ENCODE measurements at regions of chr19 and their contacts with region 1.

Region 1: DNA sequence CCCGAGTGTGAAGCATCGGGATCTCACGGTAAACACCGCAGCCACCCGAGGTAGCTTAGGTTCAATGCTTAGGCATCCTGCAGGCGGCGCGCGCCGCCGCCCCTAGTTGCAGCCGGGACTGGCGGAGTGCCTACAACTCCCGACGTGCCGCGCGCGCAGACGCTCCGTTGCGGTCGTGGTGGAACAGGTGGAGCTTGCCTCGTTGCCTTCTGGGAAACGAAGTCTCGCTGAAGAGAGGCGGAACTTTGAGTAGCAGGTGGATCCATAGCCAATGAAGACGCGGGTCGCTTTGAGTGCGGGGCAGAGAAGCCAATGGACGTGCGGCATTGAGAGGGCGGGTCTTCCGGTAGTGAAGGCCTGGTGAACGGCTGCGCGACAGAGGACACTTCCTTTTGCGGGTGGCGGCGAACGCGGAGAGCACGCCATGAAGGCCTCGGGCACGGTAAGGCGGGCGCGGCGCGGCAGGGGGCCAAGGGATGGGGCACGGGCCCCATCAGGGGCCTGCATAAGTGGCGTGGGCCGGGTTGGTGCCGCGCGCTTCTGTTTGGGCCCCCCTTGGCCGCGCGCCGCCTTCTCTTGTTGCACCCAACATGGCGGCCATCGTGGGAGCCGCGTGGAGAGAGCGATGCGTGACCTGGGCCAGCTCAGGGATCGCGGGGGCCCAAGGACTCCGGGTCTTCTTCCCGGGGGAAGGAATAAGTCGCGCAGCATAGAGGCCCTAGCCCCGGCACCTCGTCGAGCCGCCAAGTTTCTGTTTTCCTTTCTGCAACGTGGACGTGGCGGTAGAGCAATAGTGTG is at the start of gene RPL18A:
- DNase-seq: peak; percentile 99
- H3K4me3 Mint-ChIP-seq: peak within 1 kb of the TSS; percentile 99
- H3K27ac Mint-ChIP-seq: peak within 1 kb of the TSS; percentile 99
- H3K4me1 Mint-ChIP-seq: peaks cover 20% of the 10 kb centered on the region
- H3K27me3 Mint-ChIP-seq: no peaks in the 10 kb centered on the region
- total RNA-seq, gene RPL18A: 2,784 and 2,842 TPM in 2 replicates

Region 2: GRCh38 chr19:17747205-17748098 is 112.3 kb before region 1 on chr19:
- intact Hi-C with region 1: loop called (anchors 5 kb)
- DNase-seq: peak; percentile 93
- H3K4me3 Mint-ChIP-seq: peak overlapping the region; percentile 88
- H3K27ac Mint-ChIP-seq: peak overlapping the region; percentile 82
- H3K4me1 Mint-ChIP-seq: peaks cover 34% of the 10 kb centered on the region
- H3K27me3 Mint-ChIP-seq: no peaks in the 10 kb centered on the region

Region 3: GRCh38 chr19:17811681-17812080 is 48.1 kb before region 1 on chr19:
- intact Hi-C with region 1: loop called (anchors 5 kb)
- DNase-seq: no peak
- H3K4me3 Mint-ChIP-seq: no peak overlapping the region
- H3K27ac Mint-ChIP-seq: no peak overlapping the region
- H3K4me1 Mint-ChIP-seq: peaks cover 2% of the 10 kb centered on the region
- H3K27me3 Mint-ChIP-seq: peaks cover 4% of the 10 kb centered on the region

Region 4: GRCh38 chr19:17847538-17848366 is 12.0 kb before region 1 on chr19 and contains the start of gene JAK3:
- intact Hi-C with region 1: no loop called
- DNase-seq: peak; percentile 82
- H3K4me3 Mint-ChIP-seq: peak within 1 kb of the TSS; percentile 90
- H3K27ac Mint-ChIP-seq: peak within 1 kb of the TSS; percentile 97
- H3K4me1 Mint-ChIP-seq: peaks cover 45% of the 10 kb centered on the region
- H3K27me3 Mint-ChIP-seq: no peaks in the 10 kb centered on the region
- total RNA-seq, gene JAK3: 212 and 221 TPM in 2 replicates

Region 5: GRCh38 chr19:17932485-17933338 is 73.0 kb after region 1 on chr19 and contains the start of gene CCDC124:
- intact Hi-C with region 1: loop called (anchors 1 kb)
- DNase-seq: peak; percentile 89
- H3K4me3 Mint-ChIP-seq: peak within 1 kb of the TSS; percentile 97
- H3K27ac Mint-ChIP-seq: peak within 1 kb of the TSS; percentile 94
- H3K4me1 Mint-ChIP-seq: peaks cover 14% of the 10 kb centered on the region
- H3K27me3 Mint-ChIP-seq: no peaks in the 10 kb centered on the region
- total RNA-seq, gene CCDC124: 116 and 123 TPM in 2 replicates

Measured in activated T-helper 2 cell treated with anti-CD3 and anti-CD28 coated beads, Interferon-gamma antibody, Interleukin-2, Interleukin-4, amounts not matched to agents 10 μg/mL and 5 μg/mL and 100 μg/mL, durations not matched to agents 14 hours and 24 hours and 36 hours (primary cell).